ENCODE measurements at regions of chr6 and their contacts with region 1.

Region 1: DNA sequence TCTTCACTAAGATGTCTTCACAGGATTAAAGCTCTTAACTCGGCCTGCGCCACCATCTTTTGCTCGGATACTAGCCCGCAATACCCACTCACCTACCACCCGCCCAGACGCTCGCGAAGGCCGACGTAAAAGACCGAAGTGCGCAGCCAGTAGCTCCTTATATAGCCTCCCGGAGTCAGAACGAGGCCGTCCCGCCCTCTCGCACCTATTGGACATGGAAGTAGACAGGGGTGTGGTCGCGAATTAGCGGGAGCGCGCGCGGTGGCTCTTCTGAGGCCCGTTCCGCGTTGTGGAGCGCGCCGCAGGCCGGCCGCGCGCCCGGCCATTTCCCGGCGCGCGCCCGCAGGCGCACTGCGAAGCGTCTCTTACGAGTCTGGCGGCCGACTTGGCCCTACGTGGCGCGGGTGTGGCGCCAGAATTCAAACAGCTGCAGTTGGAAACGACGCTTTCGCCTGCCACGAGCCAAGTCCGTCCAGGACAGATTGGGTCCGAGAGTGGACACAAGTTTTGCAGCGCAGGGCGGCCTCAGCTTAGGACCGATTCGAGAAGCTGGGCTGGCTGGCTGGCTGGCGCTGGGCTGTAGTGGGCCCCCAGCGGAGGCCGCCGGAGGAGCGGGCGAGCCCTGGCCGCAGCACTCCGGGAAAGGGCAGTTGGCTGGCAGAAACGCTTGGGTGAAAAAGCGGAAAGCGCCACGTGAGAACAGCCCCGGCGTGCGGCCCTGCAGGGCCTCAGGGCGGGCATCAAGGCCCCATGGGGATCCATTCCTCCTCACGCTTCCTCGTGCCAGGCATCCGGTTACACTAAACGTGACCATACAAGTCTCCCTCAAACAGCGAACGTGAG is 36.1 kb upstream of the SYNCRIP start:
- DNase-seq: peak; percentile 98
- H3K4me3 Mint-ChIP-seq: peak overlapping the region; percentile 100
- H3K27ac Mint-ChIP-seq: peak overlapping the region; percentile 92
- H3K4me1 Mint-ChIP-seq: peaks cover 47% of the 10 kb centered on the region
- H3K27me3 Mint-ChIP-seq: no peaks in the 10 kb centered on the region

Region 2: DNA sequence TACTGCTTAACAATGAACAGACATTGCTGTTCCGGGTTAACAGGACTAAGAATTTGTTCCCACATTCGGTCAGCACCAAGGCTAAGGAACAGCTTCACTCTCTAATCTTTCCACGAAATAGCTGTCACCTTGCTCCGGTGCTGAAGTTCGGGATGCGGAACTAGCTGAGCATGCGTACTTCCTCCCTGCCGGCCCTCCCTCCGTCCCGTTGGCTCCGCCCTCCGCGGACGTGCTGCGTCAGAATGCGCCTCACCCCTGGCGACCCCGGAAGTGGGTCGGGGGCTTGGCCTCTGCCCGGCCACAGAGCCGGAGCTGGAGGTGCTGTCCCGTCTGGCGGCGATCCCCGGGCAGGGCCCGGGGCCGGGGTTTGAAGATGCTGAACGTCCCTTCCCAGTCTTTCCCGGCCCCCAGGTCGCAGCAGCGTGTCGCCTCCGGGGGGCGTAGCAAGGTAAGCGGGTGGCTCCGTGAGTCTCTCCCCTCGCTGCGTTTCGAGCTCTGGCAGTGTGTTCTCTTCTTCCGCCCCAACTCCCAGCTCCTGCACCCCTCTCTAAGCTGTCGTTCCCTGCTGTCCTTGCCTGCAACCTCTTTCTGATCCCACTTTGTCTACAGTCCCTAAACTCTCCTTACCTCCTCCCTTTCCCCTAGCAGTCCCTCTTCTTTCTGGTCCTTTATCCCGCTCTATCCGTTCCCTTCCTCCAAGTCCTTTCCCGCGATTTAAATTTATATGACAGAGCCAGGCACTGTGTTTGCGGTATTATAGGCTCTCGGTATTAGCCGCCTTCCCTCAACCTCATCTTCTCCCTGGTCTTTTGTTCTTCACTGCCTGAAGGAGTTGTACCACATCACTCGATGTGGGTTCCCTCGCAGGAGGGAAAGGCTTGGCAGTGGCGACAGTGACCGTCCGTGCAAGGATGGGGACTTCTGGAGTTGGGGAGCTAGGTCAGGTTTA is 1819.1 kb before region 1 on chr6 and contains the start of gene CYB5R4:
- intact Hi-C with region 1: loop called (anchors 5 kb)
- DNase-seq: peak; percentile 91
- H3K4me3 Mint-ChIP-seq: peak within 1 kb of the TSS; percentile 99
- H3K27ac Mint-ChIP-seq: peak within 1 kb of the TSS; percentile 90
- H3K4me1 Mint-ChIP-seq: peaks cover 33% of the 10 kb centered on the region
- H3K27me3 Mint-ChIP-seq: peaks cover 11% of the 10 kb centered on the region
- total RNA-seq, gene CYB5R4: 24.5 and 25.3 TPM in 2 replicates

Region 3: DNA sequence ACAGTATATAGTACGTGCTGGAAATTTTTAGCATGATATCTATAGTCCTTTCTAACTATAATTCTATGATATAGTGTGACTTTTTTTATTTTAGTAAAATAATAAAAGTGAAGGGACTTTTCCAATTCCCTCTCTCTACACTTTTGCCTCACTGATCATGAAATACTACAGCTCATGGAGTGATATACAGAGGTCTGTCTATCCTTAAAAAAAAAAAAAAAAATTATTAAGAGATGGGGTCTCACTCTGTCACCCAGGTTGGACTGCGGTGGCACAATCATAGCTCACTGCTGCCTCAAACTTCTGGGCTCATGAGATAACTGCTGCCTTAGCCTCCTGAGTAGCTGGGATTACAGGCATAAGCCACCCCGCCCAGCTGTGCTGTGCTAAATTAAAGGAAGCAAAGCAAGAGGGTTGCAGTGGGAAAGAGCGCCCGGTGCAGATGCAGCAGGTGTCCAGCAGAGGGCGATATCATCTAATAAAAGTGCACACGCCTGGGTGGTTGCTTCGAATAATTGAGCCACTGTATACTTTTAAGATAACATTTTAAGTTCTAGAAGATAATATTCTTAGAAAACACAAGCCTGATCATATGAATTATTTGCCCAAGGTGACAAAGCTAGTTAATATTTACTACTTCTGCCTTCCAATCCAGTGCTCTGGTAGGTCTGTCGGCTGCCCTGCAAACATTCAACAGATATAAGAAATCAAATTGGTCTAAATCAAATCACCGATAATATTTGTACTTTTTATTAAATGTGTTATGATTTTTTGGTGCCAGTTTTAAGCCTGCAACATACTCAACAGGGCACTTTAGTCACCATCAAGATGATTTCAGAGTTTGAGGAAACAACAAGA is 323.8 kb before region 1 on chr6:
- intact Hi-C with region 1: loop called (anchors 5 kb)
- DNase-seq: peak; percentile 43
- H3K4me3 Mint-ChIP-seq: no peak overlapping the region
- H3K27ac Mint-ChIP-seq: no peak overlapping the region
- H3K4me1 Mint-ChIP-seq: no peaks in the 10 kb centered on the region
- H3K27me3 Mint-ChIP-seq: no peaks in the 10 kb centered on the region

Region 4: DNA sequence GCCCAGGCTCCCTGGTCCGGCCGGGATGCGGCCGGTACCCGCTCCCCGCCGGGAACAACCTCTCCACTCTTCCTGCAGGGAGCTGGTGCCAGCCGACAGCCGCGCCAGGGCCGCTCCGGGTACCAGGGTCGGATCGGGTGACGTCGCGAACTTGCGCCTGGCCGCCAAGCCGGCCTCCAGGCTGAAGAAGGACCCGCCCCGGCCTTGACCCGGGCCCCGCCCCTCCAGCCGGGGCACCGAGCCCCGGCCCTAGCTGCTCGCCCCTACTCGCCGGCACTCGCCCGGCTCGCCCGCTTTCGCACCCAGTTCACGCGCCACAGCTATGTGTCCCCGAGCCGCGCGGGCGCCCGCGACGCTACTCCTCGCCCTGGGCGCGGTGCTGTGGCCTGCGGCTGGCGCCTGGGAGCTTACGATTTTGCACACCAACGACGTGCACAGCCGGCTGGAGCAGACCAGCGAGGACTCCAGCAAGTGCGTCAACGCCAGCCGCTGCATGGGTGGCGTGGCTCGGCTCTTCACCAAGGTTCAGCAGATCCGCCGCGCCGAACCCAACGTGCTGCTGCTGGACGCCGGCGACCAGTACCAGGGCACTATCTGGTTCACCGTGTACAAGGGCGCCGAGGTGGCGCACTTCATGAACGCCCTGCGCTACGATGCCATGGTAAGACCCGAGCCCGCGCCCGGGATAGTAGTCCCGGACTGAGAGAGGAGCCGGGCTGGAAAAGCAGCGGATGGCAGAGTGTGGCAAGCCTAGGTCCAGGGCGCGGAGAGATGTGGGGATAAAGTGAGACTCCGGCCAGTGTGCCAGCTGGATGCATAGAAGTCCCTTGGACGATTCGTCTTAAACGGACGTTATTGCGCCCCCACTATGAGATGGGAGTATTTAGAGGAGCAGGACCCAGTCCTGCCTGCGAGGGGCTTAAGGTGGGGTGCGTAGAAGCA is 228.7 kb before region 1 on chr6 and contains the start of gene NT5E:
- intact Hi-C with region 1: loop called (anchors 2 kb)
- DNase-seq: peak; percentile 37
- H3K4me3 Mint-ChIP-seq: peak within 1 kb of the TSS; percentile 98
- H3K27ac Mint-ChIP-seq: peak within 1 kb of the TSS; percentile 89
- H3K4me1 Mint-ChIP-seq: peaks cover 66% of the 10 kb centered on the region
- H3K27me3 Mint-ChIP-seq: peaks cover 31% of the 10 kb centered on the region
- total RNA-seq, gene NT5E: 12.5 and 15.2 TPM in 2 replicates

Region 5: GRCh38 chr6:85593438-85594196 is 85.2 kb before region 1 on chr6 and contains the start of gene SNX14:
- intact Hi-C with region 1: loop called (anchors 1 kb)
- DNase-seq: peak; percentile 74
- H3K4me3 Mint-ChIP-seq: peak within 1 kb of the TSS; percentile 94
- H3K27ac Mint-ChIP-seq: peak within 1 kb of the TSS; percentile 93
- H3K4me1 Mint-ChIP-seq: peaks cover 14% of the 10 kb centered on the region
- H3K27me3 Mint-ChIP-seq: no peaks in the 10 kb centered on the region
- total RNA-seq, gene SNX14: 49.5 and 51.0 TPM in 2 replicates

Measured in activated T-helper 1 cell treated with anti-CD3 and anti-CD28 coated beads, Interleukin-12 subunit alpha, Interleukin-12 subunit beta, Interleukin-2, Interleukin-4 antibody, amounts not matched to agents 30 ng/mL and 10 ng/mL and 1 ng/mL, durations not matched to agents 14 hours and 24 hours and 36 hours (primary cell).